ENCODE measurements at regions of chr1 and their contacts with region 1.

Region 1: GRCh38 chr1:98053471-98054366 is 132.9 kb upstream of the DPYD start:
- DNase-seq: peak; percentile 85
- H3K4me3 ChIP-seq: peak overlapping the region in 2 of 3 experiments; percentile 34 to 35
- H3K27ac ChIP-seq: peak overlapping the region; percentile 89
- H3K4me1 ChIP-seq: peaks cover 35% of the 10 kb centered on the region
- H3K27me3 ChIP-seq: no peaks in the 10 kb centered on the region
- CTCF ChIP-seq: peak; percentile 68 to 97
- POLR2A ChIP-seq: no peak

Region 2: DNA sequence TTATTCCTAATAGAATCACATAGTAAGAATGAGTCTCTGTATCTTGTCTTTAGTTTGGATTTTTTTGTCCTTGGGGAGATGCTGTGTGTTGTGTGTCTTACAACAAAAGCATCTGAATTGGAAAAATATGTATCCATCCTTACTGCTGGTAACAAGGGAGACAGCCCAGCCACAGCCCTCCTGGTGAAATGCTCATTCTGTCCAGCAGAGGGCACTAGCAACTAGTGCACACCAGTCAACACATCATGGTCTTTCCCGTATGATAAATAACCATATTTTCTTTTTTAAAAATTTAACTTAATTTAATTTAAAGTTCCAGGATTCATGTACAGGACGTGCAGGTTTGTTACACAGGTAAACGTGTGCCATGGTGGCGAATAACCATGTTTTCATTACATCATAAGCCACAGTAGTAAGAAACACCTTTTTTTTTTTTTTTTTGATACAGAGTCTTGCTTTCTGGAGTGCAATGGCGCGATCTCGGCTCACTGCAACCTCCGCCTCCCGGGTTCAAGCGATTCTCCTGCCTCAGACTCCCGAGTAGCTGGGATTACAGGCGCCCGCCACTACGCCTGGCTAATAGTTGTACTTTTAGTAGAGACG is 1087.1 kb before region 1 on chr1:
- CTCF ChIA-PET with region 1: interaction called, 3 read pairs
- POLR2A ChIA-PET with region 1: no interaction called
- dilution Hi-C with region 1: no loop called
- intact Hi-C with region 1: loop called (anchors 1 kb)
- DNase-seq: peak; percentile 84
- H3K4me3 ChIP-seq: peak overlapping the region in 1 of 3 experiments; percentile 38
- H3K27ac ChIP-seq: no peak overlapping the region
- H3K4me1 ChIP-seq: no peaks in the 10 kb centered on the region
- H3K27me3 ChIP-seq: peaks cover 7 to 12% of the 10 kb centered on the region in 2 experiments
- CTCF ChIP-seq: peak; percentile 81 to 85
- POLR2A ChIP-seq: no peak

Region 3: DNA sequence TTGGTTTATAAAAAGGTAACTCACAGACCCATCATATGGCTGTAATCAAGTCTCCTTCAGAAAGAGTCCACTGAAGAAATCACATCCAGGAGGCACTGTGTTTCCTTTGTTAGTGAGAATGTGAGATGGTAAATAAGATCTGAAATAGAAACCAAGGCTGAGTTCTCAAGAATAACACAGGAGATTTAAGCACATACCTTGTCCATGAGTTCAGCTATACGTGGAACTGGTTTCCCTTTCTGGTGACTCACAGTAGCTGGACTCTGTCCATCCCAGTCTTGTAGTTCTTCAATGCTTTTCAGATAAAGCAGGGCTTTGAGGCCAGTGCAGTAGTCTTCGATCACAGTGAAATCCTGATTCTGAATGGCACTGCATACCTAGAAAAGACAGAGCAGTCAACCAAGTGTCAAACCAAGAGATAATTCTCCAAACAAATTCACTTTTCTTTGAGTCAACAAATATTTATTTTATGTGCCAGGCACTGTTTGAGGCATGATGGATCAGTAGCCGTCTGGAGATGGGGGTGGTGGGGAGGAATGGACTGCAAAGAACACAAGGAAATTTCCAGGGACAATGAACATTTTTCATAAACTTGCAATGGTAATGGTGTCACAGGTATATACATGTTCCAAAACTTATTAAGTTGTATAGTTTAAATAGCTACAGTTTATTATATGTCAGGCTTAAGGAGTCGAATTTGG is 860.7 kb before region 1 on chr1:
- CTCF ChIA-PET with region 1: interaction called, 3 read pairs
- POLR2A ChIA-PET with region 1: no interaction called
- dilution Hi-C with region 1: no loop called
- intact Hi-C with region 1: loop called (anchors 2 kb)
- DNase-seq: peak; percentile 97
- H3K4me3 ChIP-seq: peak overlapping the region in 1 of 3 experiments; percentile 15
- H3K27ac ChIP-seq: peak overlapping the region; percentile 73
- H3K4me1 ChIP-seq: peaks cover 15% of the 10 kb centered on the region
- H3K27me3 ChIP-seq: no peaks in the 10 kb centered on the region
- CTCF ChIP-seq: no peak
- POLR2A ChIP-seq: no peak

Region 4: GRCh38 chr1:97668945-97669344 is 384.8 kb before region 1 on chr1:
- CTCF ChIA-PET with region 1: interaction called, 3 read pairs
- POLR2A ChIA-PET with region 1: no interaction called
- dilution Hi-C with region 1: no loop called
- intact Hi-C with region 1: loop called (anchors 1 kb)
- DNase-seq: peak; percentile 66
- H3K4me3 ChIP-seq: no peak overlapping the region
- H3K27ac ChIP-seq: no peak overlapping the region
- H3K4me1 ChIP-seq: no peaks in the 10 kb centered on the region
- H3K27me3 ChIP-seq: no peaks in the 10 kb centered on the region
- CTCF ChIP-seq: peak; percentile 23
- POLR2A ChIP-seq: no peak

Region 5: DNA sequence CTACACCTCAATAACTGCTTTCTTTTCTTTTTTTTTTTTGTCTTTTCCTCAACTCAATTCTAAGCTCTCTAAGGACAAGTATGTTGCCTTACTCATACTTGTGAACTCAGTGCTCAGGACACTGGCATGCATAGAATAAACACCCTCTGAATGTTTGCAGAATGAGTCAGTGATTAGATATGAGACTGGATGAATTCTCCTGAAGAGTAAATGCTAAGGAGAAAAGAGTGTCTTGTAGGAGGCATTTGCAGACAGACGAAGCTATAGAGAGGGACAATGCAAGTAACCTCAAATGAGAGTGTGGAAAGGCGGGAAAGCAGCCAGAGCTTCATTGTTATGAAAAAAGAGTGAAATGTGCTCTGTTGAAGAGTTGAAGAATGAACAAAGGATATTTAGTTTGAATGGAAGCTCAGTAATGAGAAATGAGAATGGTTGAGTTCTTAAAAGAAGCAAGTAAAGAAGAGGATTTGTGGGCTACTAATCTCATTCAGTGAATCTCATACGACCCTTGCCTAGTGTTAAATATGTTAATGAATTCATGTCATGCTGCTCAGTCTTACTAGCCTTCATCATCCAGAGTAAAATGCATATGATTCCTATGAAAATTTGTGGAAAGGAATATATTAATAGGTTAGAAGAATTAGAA is 33.2 kb after region 1 on chr1:
- CTCF ChIA-PET with region 1: interaction called, 6 read pairs
- POLR2A ChIA-PET with region 1: interaction called, 7 read pairs
- dilution Hi-C with region 1: no loop called
- intact Hi-C with region 1: loop called (anchors 1 kb)
- DNase-seq: peak; percentile 95
- H3K4me3 ChIP-seq: peak overlapping the region in 1 of 3 experiments; percentile 90
- H3K27ac ChIP-seq: peak overlapping the region; percentile 71
- H3K4me1 ChIP-seq: peaks cover 46% of the 10 kb centered on the region
- H3K27me3 ChIP-seq: no peaks in the 10 kb centered on the region
- CTCF ChIP-seq: no peak
- POLR2A ChIP-seq: no peak

Region 6: DNA sequence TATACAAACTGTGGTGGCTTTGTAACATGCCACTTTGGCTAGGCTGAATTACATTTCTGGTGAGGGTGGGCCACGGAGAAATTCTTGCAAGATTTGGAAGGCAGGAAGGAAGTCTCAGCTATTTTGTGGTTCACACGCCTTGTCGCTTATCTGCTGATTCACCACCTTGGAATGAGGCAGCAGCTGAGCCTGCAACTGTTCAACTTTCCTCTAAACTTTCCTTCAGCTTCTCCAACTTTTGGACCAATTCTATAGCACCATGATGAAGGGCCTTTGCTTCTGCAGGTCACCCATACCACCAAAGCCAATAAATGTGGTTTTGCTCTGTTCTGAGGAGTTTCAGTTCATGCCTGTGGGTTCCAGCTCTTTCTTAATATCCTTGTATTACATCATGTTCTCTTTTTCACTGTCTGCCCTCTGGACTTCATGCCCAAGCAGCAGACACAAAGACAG is 270.2 kb after region 1 on chr1:
- CTCF ChIA-PET with region 1: interaction called, 3 read pairs
- POLR2A ChIA-PET with region 1: no interaction called
- dilution Hi-C with region 1: no loop called
- intact Hi-C with region 1: loop called (anchors 1 kb)
- DNase-seq: peak; percentile 86
- H3K4me3 ChIP-seq: peak overlapping the region in 1 of 3 experiments; percentile 26
- H3K27ac ChIP-seq: peak overlapping the region; percentile 97
- H3K4me1 ChIP-seq: peaks cover 72% of the 10 kb centered on the region
- H3K27me3 ChIP-seq: no peaks in the 10 kb centered on the region
- CTCF ChIP-seq: no peak
- POLR2A ChIP-seq: peak; percentile 80

Measured in endothelial cell of umbilical vein (primary cell).